ENCODE measurements at regions of chr11 and their contacts with region 1.

Region 1: GRCh38 chr11:17978553-17979287 is 34.1 kb downstream of the SERGEF start:
- DNase-seq: no peak
- H3K4me3 ChIP-seq: no peak overlapping the region
- H3K27ac ChIP-seq: no peak overlapping the region
- H3K4me1 ChIP-seq: peaks cover 0 to 17% (median 5%) of the 10 kb centered on the region in 6 donors
- H3K27me3 ChIP-seq: no peaks in the 10 kb centered on the region
- CTCF ChIP-seq: peak in 9 of 11 experiments; percentile 28 to 66 (median 53)
- POLR2A ChIP-seq: no peak

Region 2: GRCh38 chr11:17598700-17599459 is 379.8 kb before region 1 on chr11:
- intact Hi-C with region 1: loop called (anchors 5 kb)
- DNase-seq: peak; percentile 90
- H3K4me3 ChIP-seq: no peak overlapping the region
- H3K27ac ChIP-seq: no peak overlapping the region
- H3K4me1 ChIP-seq: peaks cover 0 to 3% (median 0%) of the 10 kb centered on the region in 6 donors
- H3K27me3 ChIP-seq: peaks cover 0 to 28% (median 0%) of the 10 kb centered on the region in 7 donors
- CTCF ChIP-seq: peak; percentile 54 to 93 (median 84)
- POLR2A ChIP-seq: no peak

Region 3: GRCh38 chr11:17722000-17722643 is 256.6 kb before region 1 on chr11:
- intact Hi-C with region 1: loop called (anchors 10 kb)
- DNase-seq: no peak
- H3K4me3 ChIP-seq: peak overlapping the region in 1 of 8 donors; percentile 27
- H3K27ac ChIP-seq: no peak overlapping the region
- H3K4me1 ChIP-seq: peaks cover 0 to 39% (median 26%) of the 10 kb centered on the region in 6 donors
- H3K27me3 ChIP-seq: peaks cover 3 to 90% (median 53%) of the 10 kb centered on the region in 7 donors
- CTCF ChIP-seq: peak in 3 of 11 experiments; percentile 24 to 35 (median 31)
- POLR2A ChIP-seq: no peak

Region 4: GRCh38 chr11:17760102-17761029 is 218.4 kb before region 1 on chr11:
- intact Hi-C with region 1: loop called (anchors 2 kb)
- DNase-seq: no peak
- H3K4me3 ChIP-seq: no peak overlapping the region
- H3K27ac ChIP-seq: no peak overlapping the region
- H3K4me1 ChIP-seq: no peaks in the 10 kb centered on the region
- H3K27me3 ChIP-seq: no peaks in the 10 kb centered on the region
- CTCF ChIP-seq: peak in 9 of 11 experiments; percentile 19 to 63 (median 54)
- POLR2A ChIP-seq: no peak

Region 5: GRCh38 chr11:18668131-18668530 is 689.4 kb after region 1 on chr11:
- intact Hi-C with region 1: no loop called
- DNase-seq: no peak
- H3K4me3 ChIP-seq: no peak overlapping the region
- H3K27ac ChIP-seq: no peak overlapping the region
- H3K4me1 ChIP-seq: peaks cover 0 to 23% (median 0%) of the 10 kb centered on the region in 6 donors
- H3K27me3 ChIP-seq: no peaks in the 10 kb centered on the region
- CTCF ChIP-seq: no peak
- POLR2A ChIP-seq: no peak